ENCODE measurements at regions of chr11 and their contacts with region 1.

Region 1: GRCh38 chr11:27158722-27159679 is 118.4 kb downstream of the BBOX1 start:
- DNase-seq: no peak
- ATAC-seq: no peak
- H3K4me3 ChIP-seq: no peak overlapping the region
- H3K4me3 Mint-ChIP-seq: no peak overlapping the region
- H3K27ac ChIP-seq: no peak overlapping the region
- H3K27ac Mint-ChIP-seq: no peak overlapping the region
- H3K4me1 ChIP-seq: no peaks in the 10 kb centered on the region
- H3K4me1 Mint-ChIP-seq: peaks cover 0 to 3% (median 0%) of the 10 kb centered on the region in 7 donors
- H3K27me3 ChIP-seq: no peaks in the 10 kb centered on the region
- H3K27me3 Mint-ChIP-seq: peaks cover 0 to 22% (median 20%) of the 10 kb centered on the region in 5 donors

Region 2: GRCh38 chr11:26297189-26297975 is 861.6 kb before region 1 on chr11:
- CTCF ChIA-PET with region 1: no interaction called
- POLR2A ChIA-PET with region 1: no interaction called
- intact Hi-C with region 1: loop called in 1 of 2 experiments (anchors 5 kb)
- DNase-seq: no peak
- ATAC-seq: no peak
- H3K4me3 ChIP-seq: no peak overlapping the region
- H3K4me3 Mint-ChIP-seq: no peak overlapping the region
- H3K27ac ChIP-seq: no peak overlapping the region
- H3K27ac Mint-ChIP-seq: no peak overlapping the region
- H3K4me1 ChIP-seq: no peaks in the 10 kb centered on the region
- H3K4me1 Mint-ChIP-seq: peaks cover 0 to 2% (median 0%) of the 10 kb centered on the region in 7 donors
- H3K27me3 ChIP-seq: no peaks in the 10 kb centered on the region
- H3K27me3 Mint-ChIP-seq: peaks cover 0 to 5% (median 0%) of the 10 kb centered on the region in 5 donors

Region 3: DNA sequence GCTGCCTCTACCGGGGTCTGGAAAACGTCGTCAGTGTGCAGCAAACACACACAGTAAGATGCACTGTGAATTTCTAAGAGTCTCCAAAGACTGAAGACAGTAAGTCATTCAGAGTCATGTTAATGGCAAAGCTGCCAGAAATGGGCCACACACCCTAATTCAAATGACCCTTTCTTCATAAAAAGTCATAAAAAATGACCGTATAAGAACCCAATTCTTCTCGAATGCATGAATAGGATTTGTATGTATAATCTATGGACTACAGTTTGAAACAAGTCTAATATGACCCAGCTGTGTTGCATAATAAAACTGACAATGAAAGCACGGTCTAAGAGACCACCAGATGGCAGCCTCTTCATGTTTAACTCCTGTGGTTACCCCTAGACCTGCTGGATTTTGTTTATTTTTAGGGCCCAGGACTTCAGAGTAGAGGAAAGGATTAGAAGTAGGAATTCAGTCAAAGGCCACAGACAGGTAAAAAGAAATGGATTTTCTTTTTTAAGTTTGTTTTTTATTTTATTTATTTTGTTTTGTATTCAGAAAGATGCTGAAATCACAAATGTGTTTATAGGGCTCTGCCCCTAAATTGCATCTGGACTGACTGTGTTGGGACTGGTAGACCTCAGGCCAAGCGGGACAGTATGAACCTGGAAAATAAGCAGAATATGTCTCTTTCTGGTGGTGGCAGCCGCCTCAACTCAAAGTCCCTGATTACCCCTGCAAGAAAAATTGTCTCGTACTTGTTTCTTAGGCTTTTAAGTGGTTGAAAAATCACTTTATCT is 405.1 kb before region 1 on chr11:
- CTCF ChIA-PET with region 1: no interaction called
- POLR2A ChIA-PET with region 1: no interaction called
- intact Hi-C with region 1: loop called in 1 of 2 experiments (anchors 2 kb)
- DNase-seq: no peak
- ATAC-seq: no peak
- H3K4me3 ChIP-seq: no peak overlapping the region
- H3K4me3 Mint-ChIP-seq: no peak overlapping the region
- H3K27ac ChIP-seq: no peak overlapping the region
- H3K27ac Mint-ChIP-seq: no peak overlapping the region
- H3K4me1 ChIP-seq: no peaks in the 10 kb centered on the region
- H3K4me1 Mint-ChIP-seq: no peaks in the 10 kb centered on the region
- H3K27me3 ChIP-seq: no peaks in the 10 kb centered on the region
- H3K27me3 Mint-ChIP-seq: no peaks in the 10 kb centered on the region

Region 4: GRCh38 chr11:27124514-27125264 is 34.3 kb before region 1 on chr11:
- CTCF ChIA-PET with region 1: no interaction called
- POLR2A ChIA-PET with region 1: no interaction called
- intact Hi-C with region 1: no loop called
- DNase-seq: no peak
- ATAC-seq: no peak
- H3K4me3 ChIP-seq: no peak overlapping the region
- H3K4me3 Mint-ChIP-seq: no peak overlapping the region
- H3K27ac ChIP-seq: no peak overlapping the region
- H3K27ac Mint-ChIP-seq: no peak overlapping the region
- H3K4me1 ChIP-seq: no peaks in the 10 kb centered on the region
- H3K4me1 Mint-ChIP-seq: no peaks in the 10 kb centered on the region
- H3K27me3 ChIP-seq: no peaks in the 10 kb centered on the region
- H3K27me3 Mint-ChIP-seq: peaks cover 0 to 11% (median 4%) of the 10 kb centered on the region in 5 donors

Region 5: DNA sequence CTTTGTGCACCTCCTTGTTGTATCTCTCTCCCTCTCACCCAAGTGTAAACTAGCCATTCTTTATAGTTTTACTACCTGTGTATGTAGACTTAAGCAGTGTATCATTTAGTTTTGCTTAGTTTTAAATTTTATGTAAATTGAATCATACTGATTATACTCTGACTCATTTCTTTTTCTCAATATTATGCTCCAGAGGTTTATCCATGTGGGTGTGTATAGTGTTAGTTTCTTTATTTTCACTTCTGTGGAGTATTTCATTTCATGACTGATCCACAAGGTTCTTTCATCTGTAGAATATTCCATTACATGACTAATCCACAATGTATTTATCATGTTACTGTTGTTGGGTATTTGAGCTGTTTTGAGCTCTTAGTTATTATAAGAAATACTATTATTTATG is 142.0 kb after region 1 on chr11:
- CTCF ChIA-PET with region 1: no interaction called
- POLR2A ChIA-PET with region 1: no interaction called
- intact Hi-C with region 1: no loop called
- DNase-seq: no peak
- ATAC-seq: no peak
- H3K4me3 ChIP-seq: no peak overlapping the region
- H3K4me3 Mint-ChIP-seq: no peak overlapping the region
- H3K27ac ChIP-seq: no peak overlapping the region
- H3K27ac Mint-ChIP-seq: no peak overlapping the region
- H3K4me1 ChIP-seq: no peaks in the 10 kb centered on the region
- H3K4me1 Mint-ChIP-seq: no peaks in the 10 kb centered on the region
- H3K27me3 ChIP-seq: no peaks in the 10 kb centered on the region
- H3K27me3 Mint-ChIP-seq: peaks cover 0 to 3% (median 0%) of the 10 kb centered on the region in 5 donors